A673 (cell line): ENCODE measurements at regions of chr14 and their contacts with region 1.

Region 1: GRCh38 chr14:31084385-31084784 is 58.2 kb upstream of the STRN3 start:
- DNase-seq: no peak
- H3K4me3 ChIP-seq: no peak overlapping the region
- H3K27ac ChIP-seq: no peak overlapping the region
- H3K4me1 ChIP-seq: no peaks in the 10 kb centered on the region
- H3K27me3 ChIP-seq: no peaks in the 10 kb centered on the region
- CTCF ChIP-seq: no peak

Region 2: DNA sequence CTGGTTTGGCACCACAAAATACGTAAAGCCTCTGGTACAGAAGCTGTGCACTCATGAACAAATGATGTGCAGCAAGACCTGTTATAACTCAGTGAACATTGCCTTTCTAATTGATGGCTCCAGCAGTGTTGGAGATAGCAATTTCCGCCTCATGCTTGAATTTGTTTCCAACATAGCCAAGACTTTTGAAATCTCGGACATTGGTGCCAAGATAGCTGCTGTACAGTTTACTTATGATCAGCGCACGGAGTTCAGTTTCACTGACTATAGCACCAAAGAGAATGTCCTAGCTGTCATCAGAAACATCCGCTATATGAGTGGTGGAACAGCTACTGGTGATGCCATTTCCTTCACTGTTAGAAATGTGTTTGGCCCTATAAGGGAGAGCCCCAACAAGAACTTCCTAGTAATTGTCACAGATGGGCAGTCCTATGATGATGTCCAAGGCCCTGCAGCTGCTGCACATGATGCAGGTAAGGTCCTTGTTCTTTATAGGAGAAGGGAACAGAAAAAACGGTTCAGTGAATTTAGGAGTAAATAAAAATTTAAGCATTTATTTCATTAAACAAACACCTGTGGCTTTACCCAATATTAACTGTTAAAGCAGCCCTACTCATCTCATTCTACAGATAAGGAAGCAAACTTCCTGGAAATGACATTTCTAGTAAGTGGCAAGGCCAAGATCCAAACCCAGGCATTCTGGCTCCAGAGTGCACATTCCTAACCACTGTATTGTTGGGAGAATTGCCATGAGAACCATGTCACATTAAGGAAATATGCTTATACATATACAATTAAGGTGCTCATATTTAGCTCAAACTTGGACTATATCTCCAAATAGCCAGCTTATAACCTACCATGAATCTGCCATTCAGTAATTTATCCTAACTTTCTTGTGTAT is 198.3 kb before region 1 on chr14:
- CTCF ChIA-PET with region 1: no interaction called
- POLR2A ChIA-PET with region 1: no interaction called
- intact Hi-C with region 1: loop called (anchors 10 kb)
- DNase-seq: no peak
- H3K4me3 ChIP-seq: no peak overlapping the region
- H3K27ac ChIP-seq: no peak overlapping the region
- H3K4me1 ChIP-seq: no peaks in the 10 kb centered on the region
- H3K27me3 ChIP-seq: no peaks in the 10 kb centered on the region
- CTCF ChIP-seq: no peak

Region 3: GRCh38 chr14:31127690-31128089 is 43.3 kb after region 1 on chr14:
- CTCF ChIA-PET with region 1: no interaction called
- POLR2A ChIA-PET with region 1: no interaction called
- intact Hi-C with region 1: no loop called
- DNase-seq: no peak
- H3K4me3 ChIP-seq: no peak overlapping the region
- H3K27ac ChIP-seq: no peak overlapping the region
- H3K4me1 ChIP-seq: no peaks in the 10 kb centered on the region
- H3K27me3 ChIP-seq: no peaks in the 10 kb centered on the region
- CTCF ChIP-seq: no peak

Region 4: GRCh38 chr14:32710731-32711680 is 1626.6 kb after region 1 on chr14:
- CTCF ChIA-PET with region 1: no interaction called
- POLR2A ChIA-PET with region 1: no interaction called
- intact Hi-C with region 1: no loop called
- DNase-seq: peak; percentile 83
- H3K4me3 ChIP-seq: no peak overlapping the region
- H3K27ac ChIP-seq: no peak overlapping the region
- H3K4me1 ChIP-seq: peaks cover 49% of the 10 kb centered on the region
- H3K27me3 ChIP-seq: no peaks in the 10 kb centered on the region
- CTCF ChIP-seq: peak; percentile 74